ENCODE measurements at regions of chr3 and their contacts with region 1.

Region 1: DNA sequence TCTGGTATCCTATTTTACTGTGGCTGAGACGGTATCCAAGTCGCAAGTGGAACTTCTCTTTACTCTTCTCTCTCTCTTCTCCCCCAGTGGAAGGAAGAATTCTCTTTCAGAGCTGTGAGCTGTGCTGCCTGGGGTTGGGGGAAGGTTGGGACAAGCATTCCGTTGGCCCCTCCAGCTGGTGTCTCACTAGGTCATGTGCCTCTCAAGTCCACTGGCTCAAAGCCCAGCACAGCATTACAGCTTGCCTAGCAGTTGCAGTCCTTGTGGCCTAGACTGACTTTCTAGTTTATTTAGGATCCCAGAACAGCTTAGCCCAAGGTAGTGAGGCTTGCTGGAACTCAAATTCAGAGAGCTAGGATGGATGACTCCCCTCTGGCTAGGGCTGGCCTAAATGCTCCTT is 76.1 kb upstream of the SPATA16 start:
- DNase-seq: no peak
- H3K4me3 ChIP-seq: no peak overlapping the region
- H3K27ac ChIP-seq: no peak overlapping the region
- H3K27me3 ChIP-seq: no peaks in the 10 kb centered on the region
- CTCF ChIP-seq: no peak

Region 2: GRCh38 chr3:173199568-173199967 is 17.6 kb before region 1 on chr3:
- intact Hi-C with region 1: loop called in 1 of 2 experiments (anchors 2 kb)
- DNase-seq: no peak
- H3K4me3 ChIP-seq: no peak overlapping the region
- H3K27ac ChIP-seq: no peak overlapping the region
- H3K27me3 ChIP-seq: no peaks in the 10 kb centered on the region
- CTCF ChIP-seq: no peak

Region 3: GRCh38 chr3:173354124-173354523 is 137.0 kb after region 1 on chr3:
- intact Hi-C with region 1: no loop called
- DNase-seq: no peak
- H3K4me3 ChIP-seq: no peak overlapping the region
- H3K27ac ChIP-seq: no peak overlapping the region
- H3K27me3 ChIP-seq: no peaks in the 10 kb centered on the region
- CTCF ChIP-seq: no peak

Measured in dorsolateral prefrontal cortex (tissue), 120 donors.